Ovary (tissue), 10 donors: ENCODE measurements at regions of chr19 and their contacts with region 1.

Region 1: GRCh38 chr19:16957151-16957701 is 68.4 kb downstream of the F2RL3 start:
- DNase-seq: no peak
- H3K4me3 ChIP-seq: no peak overlapping the region
- H3K27ac ChIP-seq: no peak overlapping the region
- H3K4me1 ChIP-seq: peaks cover 3% of the 10 kb centered on the region
- H3K27me3 ChIP-seq: no peaks in the 10 kb centered on the region
- CTCF ChIP-seq: no peak
- EP300 ChIP-seq: no peak
- POLR2A ChIP-seq: no peak

Region 2: DNA sequence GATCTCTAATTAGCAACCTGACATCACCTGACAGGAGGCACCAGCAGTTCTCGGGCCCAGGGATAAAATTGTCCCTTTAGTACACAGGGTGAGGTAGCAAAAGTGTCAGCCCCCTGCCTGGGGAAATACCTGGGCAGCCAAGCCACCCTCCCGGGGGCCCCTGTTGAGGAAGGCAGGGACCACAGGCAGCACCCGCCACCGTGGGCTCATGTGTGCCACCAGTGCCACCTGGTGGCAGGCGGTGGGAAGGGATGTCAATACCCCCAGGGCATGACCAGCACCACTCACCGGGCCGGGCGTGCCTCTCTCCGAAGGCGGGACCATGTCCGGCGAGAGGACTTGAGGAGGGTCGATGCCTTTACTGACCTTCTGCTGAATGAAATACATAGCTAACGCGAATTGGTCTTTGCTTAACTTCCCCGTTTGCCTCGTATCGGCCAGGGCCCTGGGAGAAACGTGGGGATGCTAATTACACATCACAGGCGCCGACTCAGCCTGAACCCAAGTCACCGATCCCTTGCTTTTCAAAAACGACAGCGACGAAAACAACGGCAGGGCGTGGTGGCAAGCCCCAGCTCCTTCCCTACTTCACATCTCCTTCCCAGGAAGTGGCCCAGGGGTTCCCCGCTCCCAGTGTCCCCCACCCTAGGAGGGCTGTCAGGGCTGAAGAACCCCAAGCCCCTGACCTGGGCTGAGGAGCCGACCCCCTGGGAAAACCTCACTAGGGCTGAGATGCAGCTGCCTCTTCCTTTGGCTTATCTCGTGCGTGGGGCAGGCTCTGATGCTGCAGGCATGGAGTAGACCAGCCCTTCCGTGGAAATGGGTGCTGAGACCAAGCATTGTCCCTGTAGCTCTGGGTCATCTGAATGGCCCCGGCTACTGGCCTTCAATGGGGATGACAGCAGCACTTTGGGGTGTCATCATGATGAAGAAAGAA is 539.3 kb before region 1 on chr19:
- intact Hi-C with region 1: no loop called
- DNase-seq: peak; percentile 65 to 84 (median 77)
- H3K4me3 ChIP-seq: no peak overlapping the region
- H3K27ac ChIP-seq: peak overlapping the region in 1 of 2 donors; percentile 29
- H3K4me1 ChIP-seq: no peaks in the 10 kb centered on the region
- H3K27me3 ChIP-seq: no peaks in the 10 kb centered on the region
- CTCF ChIP-seq: peak; percentile 70 to 94 (median 88)
- EP300 ChIP-seq: no peak
- POLR2A ChIP-seq: no peak

Region 3: GRCh38 chr19:16860118-16860517 is 97.1 kb before region 1 on chr19:
- intact Hi-C with region 1: no loop called
- DNase-seq: no peak
- H3K4me3 ChIP-seq: no peak overlapping the region
- H3K27ac ChIP-seq: no peak overlapping the region
- H3K4me1 ChIP-seq: no peaks in the 10 kb centered on the region
- H3K27me3 ChIP-seq: no peaks in the 10 kb centered on the region
- CTCF ChIP-seq: no peak
- EP300 ChIP-seq: no peak
- POLR2A ChIP-seq: no peak

Region 4: GRCh38 chr19:16928916-16929315 is 28.3 kb before region 1 on chr19:
- intact Hi-C with region 1: loop called in 1 of 4 experiments (anchors 1 kb)
- DNase-seq: no peak
- H3K4me3 ChIP-seq: no peak overlapping the region
- H3K27ac ChIP-seq: no peak overlapping the region
- H3K4me1 ChIP-seq: no peaks in the 10 kb centered on the region
- H3K27me3 ChIP-seq: no peaks in the 10 kb centered on the region
- CTCF ChIP-seq: no peak
- EP300 ChIP-seq: no peak
- POLR2A ChIP-seq: no peak

Region 5: DNA sequence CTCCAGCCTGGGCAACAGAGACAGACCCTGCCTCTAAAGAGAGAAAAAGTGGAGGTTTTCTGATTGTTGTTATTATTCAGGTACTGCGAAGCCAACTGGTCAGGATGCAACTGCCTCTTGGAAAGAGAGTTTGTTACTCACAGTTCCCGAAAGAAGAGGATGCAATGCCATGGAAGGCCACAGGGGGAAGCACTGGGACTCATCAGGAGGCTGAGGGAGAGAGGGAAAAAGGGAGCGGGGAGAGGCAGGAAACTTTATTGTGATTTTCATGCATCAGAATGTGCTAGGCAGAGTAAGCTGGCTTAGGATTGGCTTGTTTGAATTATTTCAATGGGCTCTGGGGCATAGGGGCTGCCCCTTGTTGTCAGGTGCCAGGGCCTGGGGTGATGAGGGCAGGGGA is 146.0 kb after region 1 on chr19:
- intact Hi-C with region 1: no loop called
- DNase-seq: no peak
- H3K4me3 ChIP-seq: no peak overlapping the region
- H3K27ac ChIP-seq: no peak overlapping the region
- H3K4me1 ChIP-seq: no peaks in the 10 kb centered on the region
- H3K27me3 ChIP-seq: no peaks in the 10 kb centered on the region
- CTCF ChIP-seq: no peak
- EP300 ChIP-seq: no peak
- POLR2A ChIP-seq: no peak

Region 6: GRCh38 chr19:17149393-17150135 is 192.3 kb after region 1 on chr19:
- intact Hi-C with region 1: no loop called
- DNase-seq: no peak
- H3K4me3 ChIP-seq: no peak overlapping the region
- H3K27ac ChIP-seq: no peak overlapping the region
- H3K4me1 ChIP-seq: no peaks in the 10 kb centered on the region
- H3K27me3 ChIP-seq: no peaks in the 10 kb centered on the region
- CTCF ChIP-seq: no peak
- EP300 ChIP-seq: no peak
- POLR2A ChIP-seq: no peak

Region 7: DNA sequence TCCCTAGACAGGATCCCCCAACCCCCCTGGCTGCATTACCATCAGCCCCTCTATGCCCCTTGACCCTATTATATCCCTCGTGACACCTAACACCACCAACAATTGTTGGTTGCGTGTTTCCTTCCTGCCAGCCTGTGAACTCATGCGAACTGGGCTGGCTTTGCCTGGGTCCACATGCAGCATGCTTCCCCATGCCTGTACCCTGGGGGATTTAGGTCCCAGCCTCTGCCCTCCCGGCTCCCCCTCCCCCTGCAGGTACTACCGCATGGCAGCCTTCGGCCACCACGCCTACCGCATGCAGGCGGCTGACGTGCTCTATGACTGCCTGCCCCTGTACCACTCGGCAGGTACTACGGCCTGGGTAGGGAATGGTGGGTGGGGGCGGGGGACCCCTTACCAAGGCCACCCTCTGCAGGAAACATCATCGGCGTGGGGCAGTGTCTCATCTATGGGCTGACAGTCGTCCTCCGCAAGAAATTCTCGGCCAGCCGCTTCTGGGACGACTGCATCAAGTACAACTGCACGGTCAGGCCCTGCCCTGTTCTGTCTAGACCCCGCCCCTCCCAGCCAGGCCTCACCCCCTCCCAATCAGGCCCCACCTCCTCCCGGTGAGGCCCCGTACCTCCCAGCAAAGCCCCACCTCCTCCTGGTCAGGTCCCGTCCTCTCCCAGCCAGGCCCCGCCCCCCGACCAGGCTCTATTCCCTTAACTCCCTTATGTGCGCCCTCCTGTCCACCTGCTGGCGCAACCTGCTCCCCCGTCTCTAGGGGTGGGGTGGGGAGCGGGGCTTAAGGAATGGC is 531.6 kb after region 1 on chr19:
- intact Hi-C with region 1: loop called in 1 of 4 experiments (anchors 5 kb)
- DNase-seq: peak in 2 of 5 donors; percentile 52 to 59
- H3K4me3 ChIP-seq: no peak overlapping the region
- H3K27ac ChIP-seq: no peak overlapping the region
- H3K4me1 ChIP-seq: no peaks in the 10 kb centered on the region
- H3K27me3 ChIP-seq: no peaks in the 10 kb centered on the region
- CTCF ChIP-seq: no peak
- EP300 ChIP-seq: no peak
- POLR2A ChIP-seq: no peak